K562 (cell line): ENCODE measurements at regions of chr5 and their contacts with region 1.

Region 1: DNA sequence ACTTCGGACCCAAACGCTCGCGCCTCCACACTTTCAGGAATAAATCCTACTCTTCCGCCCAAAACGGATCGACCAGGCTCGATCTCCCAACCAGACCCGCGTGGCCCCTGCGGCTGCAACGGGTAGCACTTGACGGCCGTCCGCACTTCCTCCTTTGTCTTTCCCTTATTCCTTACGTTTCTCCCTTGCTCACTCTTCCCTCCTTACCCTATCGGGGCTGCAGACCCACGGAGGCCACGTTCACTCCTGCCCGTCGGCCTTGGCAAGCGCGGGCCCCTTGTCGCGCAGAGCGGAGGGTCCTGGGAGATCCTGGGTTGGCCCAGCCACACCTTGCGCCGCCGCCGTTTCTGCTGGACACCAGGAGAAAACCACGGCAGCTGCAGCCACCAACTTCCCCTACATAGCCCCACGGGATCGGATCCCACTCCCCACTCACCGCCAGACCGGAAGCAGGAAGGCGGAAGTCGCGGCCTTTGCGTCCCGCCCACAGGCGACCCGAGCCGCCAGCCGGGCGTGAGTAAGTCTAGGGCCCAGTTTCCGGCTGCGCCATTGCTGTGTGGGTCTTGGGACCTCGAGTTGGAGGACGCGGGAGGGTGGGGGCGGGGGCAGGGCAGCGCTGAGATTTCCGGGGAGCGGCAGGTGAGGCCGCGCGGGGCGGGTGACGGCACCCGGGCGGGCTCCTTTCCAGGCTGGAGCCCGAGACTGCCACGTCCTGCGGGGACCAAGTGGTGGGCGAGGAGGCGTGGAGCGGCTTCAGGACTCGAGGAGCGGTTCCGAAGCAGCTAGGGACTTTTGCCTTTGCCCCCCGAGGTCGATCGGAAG is at the start of gene SMIM15:
- DNase-seq: peak; percentile 87 to 95 (median 90)
- ATAC-seq: peak; percentile 93
- H3K4me3 ChIP-seq: peak within 1 kb of the TSS; percentile 69
- H3K27ac ChIP-seq: peak within 1 kb of the TSS; percentile 97
- H3K4me1 ChIP-seq: peaks cover 0 to 18% of the 10 kb centered on the region in 2 experiments; a peak in 3 of 5 replicates
- H3K27me3 ChIP-seq: no peaks in the 10 kb centered on the region
- CTCF ChIP-seq: no peak
- EP300 ChIP-seq: 0 out of 2 replicates have a peak, but pooled peaks have one; percentile 14
- POLR2A ChIP-seq: peak; percentile 92
- RAD21 ChIP-seq: no peak
- polyA plus RNA-seq, gene SMIM15: 16.6 to 19.7 TPM

Region 2: DNA sequence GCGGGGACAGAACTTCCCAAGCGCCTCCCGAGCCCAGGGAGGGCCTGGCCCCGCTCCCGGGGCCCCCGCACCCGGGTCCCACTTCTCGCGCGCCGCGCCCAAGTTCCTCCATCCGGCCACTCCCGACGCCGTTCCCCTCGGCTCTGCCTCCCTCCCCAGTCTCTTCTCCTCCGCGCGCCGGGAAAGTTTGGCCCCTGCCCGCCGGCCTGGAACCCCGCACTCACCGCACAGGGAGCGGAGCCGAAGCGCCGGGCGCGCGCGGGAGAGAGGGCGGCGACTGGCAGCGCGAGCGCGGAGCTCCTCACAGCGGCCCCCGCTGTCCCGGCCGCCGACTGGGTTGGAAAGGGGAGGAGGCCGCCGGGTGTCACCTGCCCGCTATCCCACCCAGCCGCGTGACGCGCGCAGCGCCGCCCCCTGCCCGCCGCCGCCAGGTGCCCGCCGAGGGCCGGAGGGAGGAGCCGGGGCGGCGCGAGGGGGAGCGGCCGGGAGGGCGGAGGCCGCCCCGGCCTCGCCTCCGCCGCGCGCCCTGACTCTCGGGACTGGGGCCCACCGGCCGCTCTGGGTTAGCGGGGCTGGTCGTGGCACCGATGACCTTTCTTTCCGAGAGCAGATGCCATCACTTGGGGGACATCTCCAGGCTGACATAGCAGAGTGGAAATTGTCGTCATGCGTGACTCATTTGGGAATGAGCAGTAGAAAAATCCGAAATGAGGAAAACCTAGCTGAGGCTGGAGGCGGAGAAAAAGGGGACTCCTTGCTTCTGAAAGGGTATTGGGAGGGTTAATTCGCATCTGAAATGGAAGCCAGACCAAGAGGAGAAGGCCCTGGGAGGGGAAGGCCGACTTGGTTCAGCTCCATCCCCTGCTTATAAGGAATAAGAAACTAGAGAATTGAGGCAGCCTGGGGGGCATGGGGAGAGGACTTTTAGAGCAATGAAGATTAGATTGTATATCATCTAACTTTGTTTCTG is 318.0 kb before region 1 on chr5 and contains the start of gene ELOVL7:
- CTCF ChIA-PET with region 1: no interaction called
- POLR2A ChIA-PET with region 1: no interaction called
- in situ Hi-C with region 1: no loop called
- intact Hi-C with region 1: loop called (anchors 10 kb)
- DNase-seq: peak; percentile 77 to 87 (median 82)
- ATAC-seq: peak; percentile 97
- H3K4me3 ChIP-seq: peak within 1 kb of the TSS; percentile 68
- H3K27ac ChIP-seq: peak within 1 kb of the TSS; percentile 44; the same call in 2 of the 3 replicates
- H3K4me1 ChIP-seq: peaks cover 5 to 14% of the 10 kb centered on the region in 2 experiments; a peak in 4 of 5 replicates
- H3K27me3 ChIP-seq: peaks cover 0 to 14% of the 10 kb centered on the region in 2 experiments; a peak in 3 of 5 replicates
- CTCF ChIP-seq: peak; percentile 28 to 69 (median 59); a peak in 4 of 6 replicates
- EP300 ChIP-seq: no peak
- POLR2A ChIP-seq: peak; percentile 48; the same call in 1 of the 2 replicates
- RAD21 ChIP-seq: peak; percentile 36 to 48; a peak in 3 of 4 replicates
- polyA plus RNA-seq, gene ELOVL7: 4.6 to 5.6 TPM

Region 3: DNA sequence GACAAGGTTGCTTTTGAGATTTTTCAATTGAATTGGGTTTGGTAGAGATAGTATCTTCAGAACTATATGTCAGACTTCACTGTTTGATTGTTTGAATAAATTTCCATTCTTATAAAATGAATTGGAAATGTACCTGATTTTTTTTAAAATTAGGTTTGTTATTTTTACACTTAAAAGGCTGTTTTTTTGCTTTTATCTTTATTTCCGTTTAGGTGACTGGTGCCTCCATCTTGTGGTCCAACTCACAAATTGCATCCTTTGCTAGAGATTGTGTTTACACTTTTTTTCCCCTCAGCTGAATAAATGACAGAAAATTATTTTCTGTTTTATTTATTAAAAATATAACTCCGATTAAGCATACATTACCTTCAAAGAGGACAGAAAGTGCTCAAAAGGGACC is 201.6 kb before region 1 on chr5:
- CTCF ChIA-PET with region 1: no interaction called
- POLR2A ChIA-PET with region 1: no interaction called
- in situ Hi-C with region 1: no loop called
- intact Hi-C with region 1: loop called (anchors 5 kb)
- DNase-seq: peak in 2 of 4 experiments; percentile 23 to 32
- ATAC-seq: peak; percentile 51; the same call in 1 of the 3 replicates
- H3K4me3 ChIP-seq: no peak overlapping the region
- H3K27ac ChIP-seq: no peak overlapping the region
- H3K4me1 ChIP-seq: no peaks in the 10 kb centered on the region
- H3K27me3 ChIP-seq: no peaks in the 10 kb centered on the region
- CTCF ChIP-seq: peak; percentile 35 to 53 (median 42); a peak in 3 of 6 replicates
- EP300 ChIP-seq: no peak
- POLR2A ChIP-seq: no peak
- RAD21 ChIP-seq: peak; percentile 53 to 66

Region 4: DNA sequence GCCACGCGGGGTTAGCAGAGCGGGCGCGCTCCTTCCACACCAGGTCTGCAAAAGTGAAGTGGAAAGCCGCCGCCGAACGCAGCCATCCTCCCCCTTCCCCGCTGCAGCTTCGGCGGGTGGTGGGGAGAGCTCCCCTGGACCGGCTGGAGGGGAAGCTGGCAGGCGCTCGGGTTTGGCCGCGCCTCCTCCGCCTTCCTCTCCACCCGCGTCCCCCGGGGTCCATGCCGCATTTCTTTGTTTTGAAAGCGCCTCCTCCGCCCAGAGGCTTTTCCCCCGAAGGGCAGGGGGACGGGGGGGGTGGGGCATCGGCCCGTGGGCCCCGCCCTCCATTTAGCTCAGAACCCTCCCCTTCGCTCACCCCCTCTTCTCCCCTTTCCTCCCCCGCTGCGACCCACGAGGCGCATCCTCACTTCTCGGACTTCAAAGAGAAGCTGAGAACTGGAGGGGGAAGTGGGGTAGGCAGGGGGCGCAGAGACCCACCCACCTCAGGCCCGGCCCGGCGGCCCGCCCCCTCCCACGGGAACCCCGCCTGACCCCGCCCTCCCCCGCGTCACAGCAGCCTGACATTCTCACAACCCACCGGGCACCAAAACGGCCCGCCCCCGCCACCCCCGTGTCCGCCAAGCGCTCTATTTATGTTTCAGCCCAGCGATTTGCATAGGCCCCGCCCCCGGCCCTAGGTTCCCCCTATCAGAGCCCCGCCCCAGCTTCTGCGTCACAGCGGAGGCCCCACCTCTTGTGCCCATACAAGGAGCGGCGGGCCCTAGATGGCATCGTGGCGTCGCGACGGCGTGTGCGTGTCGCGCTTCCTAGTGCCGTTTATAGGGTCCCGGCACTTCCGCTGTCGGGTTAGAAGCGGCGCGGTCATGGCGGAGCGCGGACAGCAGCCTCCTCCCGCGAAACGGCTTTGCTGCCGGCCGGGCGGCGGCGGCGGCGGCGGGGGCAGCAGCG is 169.5 kb after region 1 on chr5 and contains the start of gene ZSWIM6:
- CTCF ChIA-PET with region 1: no interaction called
- POLR2A ChIA-PET with region 1: no interaction called
- in situ Hi-C with region 1: no loop called
- intact Hi-C with region 1: loop called (anchors 5 kb)
- DNase-seq: peak; percentile 96 to 97 (median 96)
- ATAC-seq: peak; percentile 97
- H3K4me3 ChIP-seq: peak within 1 kb of the TSS; percentile 49
- H3K27ac ChIP-seq: no peak within 1 kb of the TSS
- H3K4me1 ChIP-seq: peaks cover 0 to 30% of the 10 kb centered on the region in 2 experiments; a peak in 2 of 5 replicates
- H3K27me3 ChIP-seq: peaks cover 46 to 52% of the 10 kb centered on the region in 2 experiments
- CTCF ChIP-seq: no peak
- EP300 ChIP-seq: no peak
- POLR2A ChIP-seq: peak; percentile 58
- RAD21 ChIP-seq: no peak
- polyA plus RNA-seq, gene ZSWIM6: 0.81 to 1.6 TPM